ENCODE measurements at regions of chr6 and their contacts with region 1.

Region 1: DNA sequence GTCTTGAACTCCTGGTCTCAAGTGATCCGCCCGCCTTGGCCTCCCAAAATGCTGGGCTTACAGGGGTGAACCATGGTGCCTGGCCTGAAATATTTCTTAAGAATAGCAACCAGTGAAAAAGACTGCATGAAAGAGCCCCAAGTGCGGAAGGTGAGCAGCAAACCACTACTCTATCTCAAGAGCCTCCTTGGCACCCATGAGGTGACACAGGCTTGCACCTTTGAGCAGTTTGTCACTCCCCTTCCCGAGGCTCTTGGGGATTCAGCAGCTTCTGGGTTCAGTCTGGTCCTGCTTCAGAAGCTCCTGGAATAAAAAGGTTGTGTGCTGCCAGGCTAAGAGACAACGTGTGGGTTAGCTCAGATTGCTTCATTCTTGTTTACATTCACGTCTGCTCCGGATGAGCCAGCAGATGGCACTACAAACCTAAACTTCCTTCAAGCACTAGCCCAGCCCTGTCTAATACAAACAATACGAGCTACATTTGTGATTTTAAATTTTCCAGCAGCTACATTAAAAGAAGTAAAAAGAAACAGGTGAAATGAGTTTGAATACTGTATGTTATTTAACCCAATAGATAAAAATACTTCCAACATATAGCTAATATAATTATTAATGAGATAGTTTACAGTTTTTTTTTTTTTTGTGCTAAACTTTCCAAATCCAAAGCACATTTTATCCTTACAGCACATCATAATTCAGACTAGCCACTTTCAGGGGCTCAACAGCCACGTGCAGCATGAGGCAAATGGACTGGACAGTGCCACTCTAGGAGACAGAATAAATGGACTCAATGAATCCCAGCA is 46.2 kb downstream of the GJA10 start:
- DNase-seq: peak; percentile 51 to 89
- ATAC-seq: peak; percentile 90 to 99 (median 97)
- H3K4me3 ChIP-seq: no peak overlapping the region
- H3K4me3 Mint-ChIP-seq: no peak overlapping the region
- H3K27ac ChIP-seq: no peak overlapping the region
- H3K27ac Mint-ChIP-seq: peak overlapping the region in 1 of 2 donors; percentile 20
- H3K4me1 ChIP-seq: peaks cover 5% of the 10 kb centered on the region
- H3K4me1 Mint-ChIP-seq: peaks cover 14 to 18% of the 10 kb centered on the region in 2 donors
- H3K27me3 ChIP-seq: no peaks in the 10 kb centered on the region
- H3K27me3 Mint-ChIP-seq: no peaks in the 10 kb centered on the region
- CTCF ChIP-seq: peak; percentile 77

Region 2: GRCh38 chr6:89873721-89874120 is 66.7 kb before region 1 on chr6:
- intact Hi-C with region 1: no loop called
- DNase-seq: no peak
- ATAC-seq: no peak
- H3K4me3 ChIP-seq: no peak overlapping the region
- H3K4me3 Mint-ChIP-seq: no peak overlapping the region
- H3K27ac ChIP-seq: no peak overlapping the region
- H3K27ac Mint-ChIP-seq: peak overlapping the region in 1 of 2 donors; percentile 29
- H3K4me1 ChIP-seq: no peaks in the 10 kb centered on the region
- H3K4me1 Mint-ChIP-seq: no peaks in the 10 kb centered on the region
- H3K27me3 ChIP-seq: no peaks in the 10 kb centered on the region
- H3K27me3 Mint-ChIP-seq: no peaks in the 10 kb centered on the region
- CTCF ChIP-seq: no peak

Region 3: DNA sequence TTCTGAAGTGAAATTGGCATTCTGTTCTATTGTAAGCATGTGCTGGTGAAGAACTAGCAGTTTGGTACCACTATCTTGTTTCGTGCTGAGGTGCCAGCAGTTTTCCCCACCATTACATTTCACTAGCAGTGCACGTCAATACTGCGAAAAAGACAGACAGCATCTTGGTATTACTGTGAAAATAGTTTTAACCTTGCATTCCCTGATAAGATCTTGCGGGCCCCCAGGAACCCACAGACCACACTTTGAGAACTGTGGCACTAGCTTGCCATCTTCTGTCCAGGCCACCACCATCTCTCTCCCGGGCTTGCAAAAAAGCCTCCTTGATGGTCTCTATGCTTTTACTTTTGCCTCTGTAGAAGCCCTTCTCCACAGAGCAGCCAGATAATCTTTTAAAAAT is 170.5 kb after region 1 on chr6:
- intact Hi-C with region 1: loop called (anchors 1 kb)
- DNase-seq: peak; percentile 63 to 82
- ATAC-seq: peak; percentile 81 to 91 (median 81)
- H3K4me3 ChIP-seq: no peak overlapping the region
- H3K4me3 Mint-ChIP-seq: no peak overlapping the region
- H3K27ac ChIP-seq: no peak overlapping the region
- H3K27ac Mint-ChIP-seq: peak overlapping the region; percentile 21 to 37
- H3K4me1 ChIP-seq: peaks cover 28% of the 10 kb centered on the region
- H3K4me1 Mint-ChIP-seq: peaks cover 34% of the 10 kb centered on the region in 2 donors
- H3K27me3 ChIP-seq: no peaks in the 10 kb centered on the region
- H3K27me3 Mint-ChIP-seq: peaks cover 0 to 8% of the 10 kb centered on the region in 2 donors
- CTCF ChIP-seq: no peak

Region 4: GRCh38 chr6:90179190-90180169 is 239.1 kb after region 1 on chr6:
- intact Hi-C with region 1: loop called (anchors 1 kb)
- DNase-seq: peak in 1 of 2 donors; percentile 70
- ATAC-seq: no peak
- H3K4me3 ChIP-seq: no peak overlapping the region
- H3K4me3 Mint-ChIP-seq: no peak overlapping the region
- H3K27ac ChIP-seq: no peak overlapping the region
- H3K27ac Mint-ChIP-seq: no peak overlapping the region
- H3K4me1 ChIP-seq: peaks cover 30% of the 10 kb centered on the region
- H3K4me1 Mint-ChIP-seq: peaks cover 27 to 39% of the 10 kb centered on the region in 2 donors
- H3K27me3 ChIP-seq: no peaks in the 10 kb centered on the region
- H3K27me3 Mint-ChIP-seq: no peaks in the 10 kb centered on the region
- CTCF ChIP-seq: peak; percentile 76

Region 5: DNA sequence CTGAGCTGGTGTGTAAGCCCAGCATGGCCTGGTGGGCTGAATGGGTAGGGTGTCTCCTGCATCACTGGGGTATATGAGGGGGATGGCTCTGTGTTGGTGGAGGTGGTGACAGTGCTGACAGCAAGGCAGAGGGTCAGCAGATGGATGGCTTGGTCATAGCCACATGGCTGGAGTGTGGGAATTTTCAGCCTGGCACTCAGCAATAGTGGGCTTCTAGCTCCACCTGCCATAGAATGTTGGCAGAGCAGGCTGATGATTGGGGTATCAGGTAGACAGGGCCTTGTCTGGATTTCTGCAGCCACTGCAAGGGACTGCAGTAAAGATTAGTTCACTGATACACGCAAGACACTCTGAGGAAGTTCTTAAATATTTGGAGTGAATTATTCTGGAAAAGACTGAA is 493.7 kb after region 1 on chr6:
- intact Hi-C with region 1: loop called (anchors 1 kb)
- DNase-seq: no peak
- ATAC-seq: no peak
- H3K4me3 ChIP-seq: no peak overlapping the region
- H3K4me3 Mint-ChIP-seq: no peak overlapping the region
- H3K27ac ChIP-seq: no peak overlapping the region
- H3K27ac Mint-ChIP-seq: no peak overlapping the region
- H3K4me1 ChIP-seq: no peaks in the 10 kb centered on the region
- H3K4me1 Mint-ChIP-seq: no peaks in the 10 kb centered on the region
- H3K27me3 ChIP-seq: no peaks in the 10 kb centered on the region
- H3K27me3 Mint-ChIP-seq: peaks cover 0 to 3% of the 10 kb centered on the region in 2 donors
- CTCF ChIP-seq: no peak

Region 6: DNA sequence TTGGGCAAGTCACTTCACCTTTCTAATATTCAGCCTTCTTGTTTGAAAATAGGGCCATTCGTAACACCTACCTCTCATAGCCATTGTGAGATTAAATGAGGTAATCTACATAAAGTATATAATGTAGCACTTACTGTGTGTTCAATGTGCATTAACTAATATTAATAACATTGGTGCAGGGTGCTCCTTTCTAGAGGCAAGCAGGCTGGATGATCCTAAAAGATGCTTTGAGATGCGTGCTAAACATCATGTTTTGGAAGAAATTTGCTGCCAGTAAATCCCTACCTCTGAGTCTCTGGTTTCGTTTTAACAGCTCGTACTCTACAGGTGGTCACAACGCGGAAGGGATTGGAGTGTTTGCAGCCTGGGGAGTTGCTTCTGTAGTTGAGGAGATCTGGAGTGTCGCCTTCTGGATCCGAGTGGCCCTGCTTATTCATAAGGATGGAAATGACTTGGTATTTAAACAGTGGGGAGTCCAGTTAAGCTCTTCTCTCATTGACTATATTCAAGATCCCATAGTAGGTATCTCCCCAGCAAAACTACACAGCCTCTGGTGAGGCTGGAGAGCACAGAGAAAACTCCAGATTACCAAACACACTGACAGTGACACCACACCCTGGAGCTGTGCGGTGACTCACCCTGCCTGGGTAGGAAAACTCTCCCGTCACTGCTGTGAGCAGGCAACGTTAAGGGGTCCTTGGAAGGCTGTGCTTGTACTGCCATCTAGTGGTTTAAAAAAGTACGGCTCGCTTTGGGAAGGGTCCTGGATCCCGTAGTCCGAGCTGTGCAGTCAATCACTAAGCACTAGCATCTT is 538.6 kb after region 1 on chr6:
- intact Hi-C with region 1: loop called (anchors 1 kb)
- DNase-seq: peak; percentile 68 to 92
- ATAC-seq: peak; percentile 92 to 97 (median 97)
- H3K4me3 ChIP-seq: no peak overlapping the region
- H3K4me3 Mint-ChIP-seq: no peak overlapping the region
- H3K27ac ChIP-seq: no peak overlapping the region
- H3K27ac Mint-ChIP-seq: peak overlapping the region in 1 of 2 donors; percentile 87
- H3K4me1 ChIP-seq: peaks cover 13% of the 10 kb centered on the region
- H3K4me1 Mint-ChIP-seq: peaks cover 11 to 12% of the 10 kb centered on the region in 2 donors
- H3K27me3 ChIP-seq: no peaks in the 10 kb centered on the region
- H3K27me3 Mint-ChIP-seq: no peaks in the 10 kb centered on the region
- CTCF ChIP-seq: peak; percentile 93

Measured in natural killer cell (primary cell).